ENCODE measurements at regions of chr2 and their contacts with region 1.

Region 1: GRCh38 chr2:41869542-41870264 is 178.1 kb upstream of the PKDCC start:
- DNase-seq: peak; percentile 77
- ATAC-seq: peak; percentile 64
- H3K4me3 ChIP-seq: no peak overlapping the region
- H3K4me3 Mint-ChIP-seq: no peak overlapping the region
- H3K27ac ChIP-seq: no peak overlapping the region
- H3K27ac Mint-ChIP-seq: no peak overlapping the region
- H3K4me1 ChIP-seq: no peaks in the 10 kb centered on the region
- H3K4me1 Mint-ChIP-seq: no peaks in the 10 kb centered on the region
- H3K27me3 ChIP-seq: peaks cover 0 to 9% (median 0%) of the 10 kb centered on the region in 4 experiments
- H3K27me3 Mint-ChIP-seq: peaks cover 12% of the 10 kb centered on the region
- CTCF ChIP-seq: peak; percentile 90

Region 2: DNA sequence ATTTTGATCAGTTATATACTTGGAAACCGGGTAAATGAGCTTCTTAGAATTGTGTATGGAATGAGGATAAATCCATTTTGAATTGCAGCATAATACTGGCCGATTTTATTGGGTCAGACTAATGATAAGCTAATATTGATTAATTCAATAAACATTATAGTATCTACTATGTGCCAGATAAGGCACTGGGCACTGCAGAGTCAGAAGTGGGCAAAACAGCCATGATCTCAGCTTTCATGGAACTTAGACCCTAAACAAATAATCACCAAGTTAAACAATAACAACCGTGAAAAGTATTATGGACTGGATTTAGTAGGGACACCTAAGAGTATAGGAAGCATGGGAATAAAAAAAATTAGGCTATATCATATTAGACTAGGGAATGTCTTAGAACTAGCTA is 118.9 kb before region 1 on chr2:
- CTCF ChIA-PET with region 1: no interaction called
- POLR2A ChIA-PET with region 1: no interaction called
- intact Hi-C with region 1: no loop called
- DNase-seq: no peak
- ATAC-seq: no peak
- H3K4me3 ChIP-seq: no peak overlapping the region
- H3K4me3 Mint-ChIP-seq: no peak overlapping the region
- H3K27ac ChIP-seq: no peak overlapping the region
- H3K27ac Mint-ChIP-seq: no peak overlapping the region
- H3K4me1 ChIP-seq: no peaks in the 10 kb centered on the region
- H3K4me1 Mint-ChIP-seq: no peaks in the 10 kb centered on the region
- H3K27me3 ChIP-seq: no peaks in the 10 kb centered on the region
- H3K27me3 Mint-ChIP-seq: peaks cover 15% of the 10 kb centered on the region
- CTCF ChIP-seq: no peak

Region 3: DNA sequence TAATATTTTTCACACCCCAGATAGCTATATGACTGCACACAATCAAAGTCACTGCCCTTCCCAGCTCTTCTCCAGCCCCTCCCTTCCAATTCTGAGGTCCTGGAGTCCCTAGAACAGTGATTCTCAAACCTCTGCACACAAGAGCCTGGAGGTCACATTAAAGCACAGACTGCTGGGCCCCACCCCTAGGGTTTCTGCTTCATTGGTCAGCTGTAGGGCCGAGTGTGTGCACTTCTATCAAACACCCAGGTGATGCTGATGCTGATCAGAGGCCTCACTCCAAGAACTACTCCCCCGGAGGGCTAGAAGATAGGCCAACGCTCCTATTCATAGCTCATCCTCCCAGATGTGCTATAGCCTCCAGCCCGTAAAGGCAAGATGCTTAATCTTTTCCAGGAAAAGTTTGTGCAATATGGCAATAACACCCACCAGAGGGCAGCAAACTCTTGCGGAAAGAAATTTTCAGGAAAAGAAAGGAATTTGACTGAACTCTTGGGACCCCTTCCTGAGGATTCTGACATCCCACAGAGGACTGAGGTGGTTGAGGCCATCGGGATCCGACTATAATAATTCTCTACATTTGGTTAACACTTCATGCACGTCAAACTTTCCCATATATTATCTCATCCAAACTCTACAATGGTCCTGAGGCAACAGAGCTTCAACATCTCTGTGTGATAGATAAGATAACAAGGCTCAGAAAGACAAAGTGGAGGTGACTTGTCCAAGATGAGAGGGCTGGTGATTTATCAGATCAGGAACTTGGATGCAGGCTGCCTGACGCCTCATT is 16.1 kb before region 1 on chr2:
- CTCF ChIA-PET with region 1: interaction called, 26 read pairs
- POLR2A ChIA-PET with region 1: no interaction called
- intact Hi-C with region 1: no loop called
- DNase-seq: peak; percentile 35
- ATAC-seq: no peak
- H3K4me3 ChIP-seq: no peak overlapping the region
- H3K4me3 Mint-ChIP-seq: no peak overlapping the region
- H3K27ac ChIP-seq: no peak overlapping the region
- H3K27ac Mint-ChIP-seq: no peak overlapping the region
- H3K4me1 ChIP-seq: peaks cover 4 to 6% of the 10 kb centered on the region in 2 donors
- H3K4me1 Mint-ChIP-seq: peaks cover 2% of the 10 kb centered on the region
- H3K27me3 ChIP-seq: peaks cover 0 to 33% (median 5%) of the 10 kb centered on the region in 4 experiments
- H3K27me3 Mint-ChIP-seq: peaks cover 29% of the 10 kb centered on the region
- CTCF ChIP-seq: peak; percentile 44

Region 4: GRCh38 chr2:42238644-42239288 is 369.1 kb after region 1 on chr2:
- CTCF ChIA-PET with region 1: interaction called, 9 read pairs
- POLR2A ChIA-PET with region 1: no interaction called
- intact Hi-C with region 1: loop called (anchors 1 kb)
- DNase-seq: peak; percentile 58
- ATAC-seq: peak; percentile 84
- H3K4me3 ChIP-seq: no peak overlapping the region
- H3K4me3 Mint-ChIP-seq: no peak overlapping the region
- H3K27ac ChIP-seq: no peak overlapping the region
- H3K27ac Mint-ChIP-seq: no peak overlapping the region
- H3K4me1 ChIP-seq: peaks cover 26 to 27% of the 10 kb centered on the region in 2 donors
- H3K4me1 Mint-ChIP-seq: peaks cover 73% of the 10 kb centered on the region
- H3K27me3 ChIP-seq: no peaks in the 10 kb centered on the region
- H3K27me3 Mint-ChIP-seq: no peaks in the 10 kb centered on the region
- CTCF ChIP-seq: peak; percentile 23

Region 5: GRCh38 chr2:42328148-42328833 is 458.6 kb after region 1 on chr2:
- CTCF ChIA-PET with region 1: interaction called, 28 read pairs
- POLR2A ChIA-PET with region 1: no interaction called
- intact Hi-C with region 1: loop called (anchors 1 kb)
- DNase-seq: peak; percentile 23
- ATAC-seq: no peak
- H3K4me3 ChIP-seq: no peak overlapping the region
- H3K4me3 Mint-ChIP-seq: no peak overlapping the region
- H3K27ac ChIP-seq: no peak overlapping the region
- H3K27ac Mint-ChIP-seq: no peak overlapping the region
- H3K4me1 ChIP-seq: no peaks in the 10 kb centered on the region
- H3K4me1 Mint-ChIP-seq: no peaks in the 10 kb centered on the region
- H3K27me3 ChIP-seq: no peaks in the 10 kb centered on the region
- H3K27me3 Mint-ChIP-seq: no peaks in the 10 kb centered on the region
- CTCF ChIP-seq: peak; percentile 40